Heart left ventricle (tissue), 16 donors: ENCODE measurements at regions of chr5 and their contacts with region 1.

Region 1: DNA sequence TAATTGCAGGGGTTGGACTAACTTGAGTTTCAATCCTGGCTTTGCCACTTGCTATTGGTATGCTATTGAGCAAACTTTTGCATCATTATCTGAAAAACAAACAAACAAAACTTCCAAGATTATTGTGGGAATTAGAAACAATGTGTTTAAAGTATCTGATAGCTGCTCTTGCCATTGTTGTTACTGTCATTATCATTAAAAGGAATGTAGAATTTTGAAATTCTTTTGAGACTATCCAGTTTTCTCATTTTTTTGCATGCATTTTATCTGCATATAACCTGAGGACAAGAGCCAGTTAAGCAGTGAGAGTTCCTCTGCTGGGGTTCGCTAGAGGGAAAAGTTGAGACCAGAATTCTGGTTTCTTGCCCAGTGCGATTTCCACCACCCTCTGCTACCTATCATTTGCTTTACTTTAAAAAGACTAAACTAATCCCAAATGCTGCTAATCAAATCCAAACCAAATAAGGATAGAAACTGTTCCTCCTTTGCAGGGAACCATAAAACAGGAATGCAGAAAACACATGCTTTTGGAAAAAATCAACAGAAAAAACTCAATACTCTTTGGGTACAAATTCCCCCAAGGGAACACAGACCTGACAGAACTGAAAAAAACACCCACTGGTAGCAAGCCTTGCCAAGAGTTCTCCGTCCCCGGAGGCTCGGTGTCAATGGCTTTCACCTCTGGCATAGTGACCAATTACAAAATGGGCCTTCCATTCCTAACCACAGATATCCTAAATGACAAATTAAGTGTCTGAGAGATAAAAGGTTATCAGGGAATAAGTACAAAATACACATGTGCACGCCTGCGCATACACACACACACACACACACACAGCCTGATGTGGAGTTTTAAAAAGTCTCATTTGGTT is 373.7 kb downstream of the ARL15 start:
- DNase-seq: peak in 4 of 5 donors; percentile 12 to 54 (median 28)
- ATAC-seq: peak; percentile 56 to 77 (median 74)
- H3K4me3 ChIP-seq: no peak overlapping the region
- H3K27ac ChIP-seq: no peak overlapping the region
- H3K4me1 ChIP-seq: peaks cover 0 to 36% (median 17%) of the 10 kb centered on the region in 12 donors
- H3K27me3 ChIP-seq: no peaks in the 10 kb centered on the region
- CTCF ChIP-seq: no peak
- POLR2A ChIP-seq: no peak

Region 2: DNA sequence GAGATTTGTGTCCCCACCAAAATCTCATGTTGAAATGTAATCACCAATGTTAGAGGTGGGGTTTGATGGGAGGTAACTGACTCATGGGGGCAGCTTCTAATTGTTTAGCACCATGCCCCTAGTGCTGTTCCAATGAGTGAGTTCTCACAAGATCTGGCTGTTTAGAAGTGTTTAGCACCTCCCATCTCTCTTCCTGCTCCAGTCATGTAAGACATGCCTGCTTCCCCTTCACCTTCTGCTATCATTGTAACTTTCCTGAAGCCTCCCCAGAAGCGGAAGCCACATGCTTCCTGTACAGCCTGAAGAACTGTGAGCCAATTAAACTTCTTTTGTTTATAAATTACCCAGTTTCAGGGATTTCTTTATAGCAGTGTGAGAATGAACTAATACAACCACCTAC is 205.8 kb before region 1 on chr5:
- intact Hi-C with region 1: no loop called
- DNase-seq: peak in 1 of 5 donors; percentile 14
- ATAC-seq: peak in 3 of 4 donors; percentile 49 to 94 (median 71)
- H3K4me3 ChIP-seq: no peak overlapping the region
- H3K27ac ChIP-seq: peak overlapping the region in 2 of 12 donors; percentile 6 to 29
- H3K4me1 ChIP-seq: peaks cover 0 to 8% (median 0%) of the 10 kb centered on the region in 12 donors
- H3K27me3 ChIP-seq: no peaks in the 10 kb centered on the region
- CTCF ChIP-seq: no peak
- POLR2A ChIP-seq: no peak

Region 3: DNA sequence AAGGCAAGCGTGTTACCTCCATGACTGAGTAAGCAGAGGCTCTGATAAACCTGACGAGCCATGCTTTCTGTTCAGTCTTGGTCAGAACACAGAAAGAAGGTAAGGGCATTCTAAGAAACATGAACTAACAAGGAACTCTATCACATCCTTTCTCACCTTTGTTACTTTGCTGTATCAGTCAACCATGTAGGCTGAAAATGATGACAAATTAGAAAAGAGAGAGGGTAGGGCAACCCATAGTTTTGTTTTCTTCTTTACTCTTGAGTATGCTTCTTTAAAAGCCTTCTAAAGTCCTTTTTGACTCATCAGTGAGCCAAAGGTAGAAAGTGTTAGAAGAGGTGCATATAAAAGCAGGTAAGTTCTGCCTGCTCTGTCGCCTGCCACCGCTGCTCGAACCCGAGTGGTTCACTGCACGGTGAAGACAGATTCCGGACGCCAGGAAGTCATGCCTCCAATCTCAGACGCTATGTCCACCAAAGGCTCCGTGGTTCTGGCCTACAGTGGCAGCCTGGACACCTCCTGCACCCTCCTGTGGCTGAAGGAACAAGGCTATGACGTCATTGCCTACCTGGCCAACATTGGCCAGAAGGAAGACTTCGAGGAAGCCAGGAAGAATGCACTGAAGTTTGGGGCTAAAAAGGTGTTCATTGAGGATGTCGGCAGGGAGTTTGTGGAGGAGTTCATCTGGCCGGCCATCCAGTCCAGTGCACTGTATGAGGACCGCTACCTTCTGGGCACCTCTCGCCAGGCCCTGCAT is 77.8 kb before region 1 on chr5:
- intact Hi-C with region 1: no loop called
- DNase-seq: no peak
- ATAC-seq: no peak
- H3K4me3 ChIP-seq: no peak overlapping the region
- H3K27ac ChIP-seq: no peak overlapping the region
- H3K4me1 ChIP-seq: no peaks in the 10 kb centered on the region
- H3K27me3 ChIP-seq: no peaks in the 10 kb centered on the region
- CTCF ChIP-seq: no peak
- POLR2A ChIP-seq: no peak

Region 4: GRCh38 chr5:53900677-53901076 is 36.0 kb before region 1 on chr5:
- intact Hi-C with region 1: loop called in 1 of 10 experiments (anchors 5 kb)
- DNase-seq: no peak
- ATAC-seq: no peak
- H3K4me3 ChIP-seq: no peak overlapping the region
- H3K27ac ChIP-seq: no peak overlapping the region
- H3K4me1 ChIP-seq: peaks cover 0 to 8% (median 0%) of the 10 kb centered on the region in 12 donors
- H3K27me3 ChIP-seq: no peaks in the 10 kb centered on the region
- CTCF ChIP-seq: no peak
- POLR2A ChIP-seq: no peak

Region 5: GRCh38 chr5:53971131-53971530 is 34.4 kb after region 1 on chr5:
- intact Hi-C with region 1: loop called in 2 of 10 experiments (anchors 1 to 5 kb)
- DNase-seq: no peak
- ATAC-seq: peak in 3 of 4 donors; percentile 55 to 84 (median 58)
- H3K4me3 ChIP-seq: no peak overlapping the region
- H3K27ac ChIP-seq: no peak overlapping the region
- H3K4me1 ChIP-seq: peaks cover 0 to 26% (median 0%) of the 10 kb centered on the region in 12 donors
- H3K27me3 ChIP-seq: no peaks in the 10 kb centered on the region
- CTCF ChIP-seq: no peak
- POLR2A ChIP-seq: no peak

Region 6: DNA sequence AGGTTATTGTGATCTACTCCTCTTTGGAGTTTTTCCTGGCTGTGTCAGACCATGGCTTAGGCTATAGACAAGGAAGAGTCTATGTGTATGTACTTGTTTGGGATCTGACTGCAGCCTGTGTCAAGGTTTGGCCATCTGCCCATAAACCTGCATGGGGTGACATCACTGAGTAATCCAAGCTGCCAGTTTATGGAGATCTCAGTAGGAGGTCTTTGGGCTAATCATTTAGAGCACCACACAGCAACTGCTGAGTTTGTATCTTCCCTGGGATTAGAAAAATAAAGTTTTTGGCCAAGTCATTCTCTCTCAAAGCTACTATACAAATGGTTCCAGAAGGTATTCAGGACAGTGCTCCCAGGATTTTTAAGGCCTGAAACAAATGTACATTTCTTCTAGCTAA is 453.3 kb after region 1 on chr5:
- intact Hi-C with region 1: no loop called
- DNase-seq: peak in 2 of 5 donors; percentile 12 to 41
- ATAC-seq: peak in 1 of 4 donors; percentile 37
- H3K4me3 ChIP-seq: no peak overlapping the region
- H3K27ac ChIP-seq: peak overlapping the region in 2 of 12 donors; percentile 16 to 66
- H3K4me1 ChIP-seq: peaks cover 0 to 48% (median 14%) of the 10 kb centered on the region in 12 donors
- H3K27me3 ChIP-seq: no peaks in the 10 kb centered on the region
- CTCF ChIP-seq: no peak
- POLR2A ChIP-seq: no peak